ENCODE measurements at regions of chr6 and their contacts with region 1.

Region 1: GRCh38 chr6:18155150-18155863 is at the start of gene KDM1B:
- DNase-seq: peak; percentile 97
- H3K4me3 Mint-ChIP-seq: peak within 1 kb of the TSS; percentile 94
- H3K27ac Mint-ChIP-seq: peak within 1 kb of the TSS; percentile 97
- H3K4me1 Mint-ChIP-seq: peaks cover 15% of the 10 kb centered on the region
- H3K27me3 Mint-ChIP-seq: no peaks in the 10 kb centered on the region
- CTCF ChIP-seq: no peak
- total RNA-seq, gene KDM1B: 21.2 and 22.3 TPM in 2 replicates

Region 2: GRCh38 chr6:17831135-17831534 is 324.2 kb before region 1 on chr6:
- CTCF ChIA-PET with region 1: no interaction called
- POLR2A ChIA-PET with region 1: no interaction called
- intact Hi-C with region 1: loop called (anchors 10 kb)
- DNase-seq: peak; percentile 11
- H3K4me3 Mint-ChIP-seq: no peak overlapping the region
- H3K27ac Mint-ChIP-seq: no peak overlapping the region
- H3K4me1 Mint-ChIP-seq: no peaks in the 10 kb centered on the region
- H3K27me3 Mint-ChIP-seq: no peaks in the 10 kb centered on the region
- CTCF ChIP-seq: no peak

Region 3: GRCh38 chr6:17907406-17908229 is 247.7 kb before region 1 on chr6:
- CTCF ChIA-PET with region 1: no interaction called
- POLR2A ChIA-PET with region 1: interaction called, 4 read pairs
- intact Hi-C with region 1: loop called (anchors 5 kb)
- DNase-seq: peak; percentile 99
- H3K4me3 Mint-ChIP-seq: peak overlapping the region; percentile 42
- H3K27ac Mint-ChIP-seq: peak overlapping the region; percentile 92
- H3K4me1 Mint-ChIP-seq: peaks cover 42% of the 10 kb centered on the region
- H3K27me3 Mint-ChIP-seq: no peaks in the 10 kb centered on the region
- CTCF ChIP-seq: peak; percentile 28

Region 4: DNA sequence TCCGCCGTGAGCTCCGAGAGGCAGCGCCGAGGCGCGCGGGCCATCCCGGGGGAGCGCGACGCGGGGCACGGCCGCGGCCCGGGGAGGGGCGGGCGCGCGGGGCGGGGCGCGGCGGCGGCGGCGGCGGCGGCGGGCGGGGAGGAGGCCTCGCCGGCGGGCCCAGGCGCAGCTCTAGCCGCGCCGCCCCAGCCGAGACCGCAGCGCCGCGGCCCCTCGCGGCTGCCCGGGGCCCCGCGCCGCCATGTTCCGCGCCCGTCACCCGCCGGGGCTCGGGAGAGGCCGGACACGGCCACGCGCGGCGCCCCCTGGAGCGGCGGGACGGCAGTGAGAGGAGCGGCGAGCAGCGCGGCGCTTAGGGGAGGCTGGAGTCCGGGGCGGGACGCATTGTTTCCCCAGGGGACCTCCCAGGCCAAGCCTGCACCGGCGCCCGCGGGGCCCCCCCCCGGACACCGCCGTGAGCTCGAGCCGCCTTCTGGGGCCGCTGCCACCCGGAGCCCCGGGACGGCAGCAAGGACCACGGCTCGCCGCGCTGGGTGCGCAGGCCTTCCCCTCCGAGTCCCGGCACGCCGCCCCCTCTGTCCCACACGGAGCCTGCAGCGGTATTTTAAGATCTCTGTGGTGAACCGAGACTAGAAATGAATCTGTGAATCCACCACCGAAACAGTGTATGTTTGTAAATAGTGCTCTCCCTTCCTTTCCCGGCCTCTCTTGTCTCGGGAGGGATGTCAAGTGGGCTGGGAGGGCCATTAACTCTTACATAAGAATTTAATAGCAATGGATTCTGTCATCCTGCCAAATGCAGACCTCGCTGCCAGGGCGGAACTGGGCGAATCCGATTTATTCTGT is 167.5 kb before region 1 on chr6 and contains the start of gene KIF13A:
- CTCF ChIA-PET with region 1: interaction called, 3 read pairs
- POLR2A ChIA-PET with region 1: interaction called, 73 read pairs
- intact Hi-C with region 1: loop called (anchors 2 kb)
- DNase-seq: peak; percentile 46
- H3K4me3 Mint-ChIP-seq: peak within 1 kb of the TSS; percentile 83
- H3K27ac Mint-ChIP-seq: peak within 1 kb of the TSS; percentile 88
- H3K4me1 Mint-ChIP-seq: peaks cover 32% of the 10 kb centered on the region
- H3K27me3 Mint-ChIP-seq: no peaks in the 10 kb centered on the region
- CTCF ChIP-seq: no peak
- total RNA-seq, gene KIF13A: 24.1 and 33.5 TPM in 2 replicates

Region 5: DNA sequence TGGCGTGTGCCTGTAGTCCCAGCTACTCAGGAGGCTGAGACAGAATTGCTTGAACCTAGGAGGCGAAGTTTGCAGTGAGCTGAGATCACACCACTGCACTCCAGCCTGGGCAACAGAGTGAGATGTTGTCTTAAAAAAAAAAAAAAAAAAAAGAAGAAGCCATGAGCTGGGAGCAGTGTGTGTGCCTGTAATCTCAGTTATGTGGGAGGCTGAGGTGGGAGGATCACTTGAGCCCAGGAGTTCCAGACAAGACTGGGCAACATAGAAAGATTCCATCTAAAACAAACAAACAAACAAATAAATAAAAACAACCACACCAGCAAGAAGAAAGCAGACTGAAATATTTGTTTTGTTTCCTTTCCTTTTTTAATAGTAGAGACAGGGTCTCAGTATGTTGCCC is 105.7 kb before region 1 on chr6:
- CTCF ChIA-PET with region 1: no interaction called
- POLR2A ChIA-PET with region 1: no interaction called
- intact Hi-C with region 1: no loop called
- DNase-seq: no peak
- H3K4me3 Mint-ChIP-seq: no peak overlapping the region
- H3K27ac Mint-ChIP-seq: no peak overlapping the region
- H3K4me1 Mint-ChIP-seq: peaks cover 19% of the 10 kb centered on the region
- H3K27me3 Mint-ChIP-seq: no peaks in the 10 kb centered on the region
- CTCF ChIP-seq: no peak

Region 6: DNA sequence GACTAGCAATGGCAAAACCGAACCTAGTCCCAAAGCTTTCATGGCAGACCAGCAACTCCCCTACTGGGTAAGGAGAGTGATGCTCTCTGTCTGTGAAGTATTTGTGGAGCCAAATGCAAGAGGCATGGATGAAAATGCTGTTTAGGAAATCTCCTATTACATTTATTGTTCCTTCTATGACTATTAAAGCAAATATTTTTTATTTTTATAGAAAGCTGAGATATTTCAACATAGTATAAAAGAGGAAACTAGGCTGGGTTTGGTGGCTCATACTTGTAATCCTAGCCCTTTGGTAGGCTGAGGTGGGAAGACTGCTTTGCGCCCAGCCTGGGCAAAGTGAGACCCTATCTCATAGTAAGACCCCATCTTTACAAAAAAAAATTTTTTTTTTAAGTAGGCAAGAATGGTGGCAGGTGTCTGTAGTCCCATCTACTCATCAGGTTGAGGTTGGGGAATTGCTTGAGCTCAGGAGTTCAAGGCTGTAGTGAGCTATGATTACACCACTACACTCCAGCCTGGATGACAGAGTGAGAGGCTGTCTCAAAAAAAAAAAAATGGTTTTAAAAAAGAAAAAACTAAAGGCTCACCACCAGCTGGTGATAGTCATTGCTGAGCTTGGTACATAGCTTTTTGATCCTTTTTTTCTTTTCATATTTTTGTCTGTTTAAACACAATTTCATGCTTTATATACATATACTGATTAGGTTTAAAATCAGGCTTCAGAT is 11.2 kb after region 1 on chr6:
- CTCF ChIA-PET with region 1: interaction called, 3 read pairs
- POLR2A ChIA-PET with region 1: interaction called, 10 read pairs
- intact Hi-C with region 1: no loop called
- DNase-seq: peak; percentile 40
- H3K4me3 Mint-ChIP-seq: no peak overlapping the region
- H3K27ac Mint-ChIP-seq: no peak overlapping the region
- H3K4me1 Mint-ChIP-seq: peaks cover 5% of the 10 kb centered on the region
- H3K27me3 Mint-ChIP-seq: no peaks in the 10 kb centered on the region
- CTCF ChIP-seq: no peak

Region 7: GRCh38 chr6:18264219-18264922 is 109.1 kb after region 1 on chr6 and contains the start of gene DEK:
- CTCF ChIA-PET with region 1: no interaction called
- POLR2A ChIA-PET with region 1: interaction called, 4 read pairs
- intact Hi-C with region 1: loop called (anchors 2 kb)
- DNase-seq: peak; percentile 83
- H3K4me3 Mint-ChIP-seq: peak within 1 kb of the TSS; percentile 96
- H3K27ac Mint-ChIP-seq: peak within 1 kb of the TSS; percentile 81
- H3K4me1 Mint-ChIP-seq: peaks cover 36% of the 10 kb centered on the region
- H3K27me3 Mint-ChIP-seq: no peaks in the 10 kb centered on the region
- CTCF ChIP-seq: peak; percentile 61
- total RNA-seq, gene DEK: 118 and 148 TPM in 2 replicates